Activated naive CD4-positive, alpha-beta T cell treated with anti-CD3 and anti-CD28 coated beads for 36 hours (primary cell): ENCODE measurements at regions of chr6 and their contacts with region 1.

Region 1: GRCh38 chr6:131532580-131533039 is 40.4 kb upstream of the ARG1 start:
- DNase-seq: peak; percentile 88
- H3K4me3 Mint-ChIP-seq: no peak overlapping the region
- H3K27ac Mint-ChIP-seq: peak overlapping the region; percentile 86
- H3K4me1 Mint-ChIP-seq: peaks cover 52% of the 10 kb centered on the region
- H3K27me3 Mint-ChIP-seq: no peaks in the 10 kb centered on the region

Region 2: GRCh38 chr6:130602151-130602770 is 930.3 kb before region 1 on chr6:
- CTCF ChIA-PET with region 1: no interaction called
- intact Hi-C with region 1: loop called (anchors 1 kb)
- DNase-seq: peak; percentile 50
- H3K4me3 Mint-ChIP-seq: no peak overlapping the region
- H3K27ac Mint-ChIP-seq: peak overlapping the region; percentile 28
- H3K4me1 Mint-ChIP-seq: peaks cover 21% of the 10 kb centered on the region
- H3K27me3 Mint-ChIP-seq: no peaks in the 10 kb centered on the region

Region 3: GRCh38 chr6:131116749-131117360 is 415.8 kb before region 1 on chr6:
- CTCF ChIA-PET with region 1: interaction called, 6 read pairs
- intact Hi-C with region 1: loop called (anchors 1 kb)
- DNase-seq: no peak
- H3K4me3 Mint-ChIP-seq: no peak overlapping the region
- H3K27ac Mint-ChIP-seq: no peak overlapping the region
- H3K4me1 Mint-ChIP-seq: no peaks in the 10 kb centered on the region
- H3K27me3 Mint-ChIP-seq: no peaks in the 10 kb centered on the region

Region 4: DNA sequence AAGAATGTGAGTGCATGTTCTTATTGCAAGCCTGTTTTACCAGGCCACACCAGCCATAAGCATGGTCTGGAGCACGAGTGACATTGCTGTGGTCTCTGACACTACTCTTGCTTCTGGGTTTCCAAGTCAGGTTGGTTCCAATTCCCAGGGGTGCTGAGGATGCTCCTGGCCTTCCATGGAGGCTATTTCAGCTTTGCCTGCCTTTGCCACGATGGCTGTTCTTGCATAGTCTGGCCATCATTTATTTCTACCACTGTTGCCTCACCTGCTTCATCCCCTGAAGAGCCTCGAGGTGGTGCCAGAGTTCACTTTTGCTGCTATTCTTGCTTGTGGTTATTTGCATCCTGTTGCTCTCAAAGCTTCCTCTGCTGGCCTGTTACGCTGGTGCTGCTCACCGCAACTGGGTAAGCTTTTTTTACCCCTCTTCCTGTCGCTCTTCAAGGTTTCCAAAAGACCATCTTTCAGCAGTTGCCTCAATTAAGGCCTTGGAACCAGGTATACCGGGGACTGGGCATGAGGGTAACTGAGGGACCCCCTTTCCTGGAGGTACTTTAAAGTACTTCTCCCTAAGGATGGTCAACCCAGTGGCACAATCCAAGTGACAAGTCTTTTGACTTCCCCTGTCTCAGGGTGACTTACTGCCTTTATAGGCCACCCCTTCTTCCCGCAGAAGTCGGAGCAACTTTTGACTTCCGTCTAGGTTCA is 332.9 kb before region 1 on chr6:
- CTCF ChIA-PET with region 1: interaction called, 74 read pairs
- intact Hi-C with region 1: loop called (anchors 1 kb)
- DNase-seq: peak; percentile 84
- H3K4me3 Mint-ChIP-seq: peak overlapping the region; percentile 78
- H3K27ac Mint-ChIP-seq: peak overlapping the region; percentile 96
- H3K4me1 Mint-ChIP-seq: peaks cover 57% of the 10 kb centered on the region
- H3K27me3 Mint-ChIP-seq: no peaks in the 10 kb centered on the region

Region 5: GRCh38 chr6:131281471-131282270 is 250.9 kb before region 1 on chr6:
- CTCF ChIA-PET with region 1: no interaction called
- intact Hi-C with region 1: loop called (anchors 2 kb)
- DNase-seq: peak; percentile 84
- H3K4me3 Mint-ChIP-seq: peak overlapping the region; percentile 75
- H3K27ac Mint-ChIP-seq: peak overlapping the region; percentile 96
- H3K4me1 Mint-ChIP-seq: peaks cover 48% of the 10 kb centered on the region
- H3K27me3 Mint-ChIP-seq: no peaks in the 10 kb centered on the region

Region 6: DNA sequence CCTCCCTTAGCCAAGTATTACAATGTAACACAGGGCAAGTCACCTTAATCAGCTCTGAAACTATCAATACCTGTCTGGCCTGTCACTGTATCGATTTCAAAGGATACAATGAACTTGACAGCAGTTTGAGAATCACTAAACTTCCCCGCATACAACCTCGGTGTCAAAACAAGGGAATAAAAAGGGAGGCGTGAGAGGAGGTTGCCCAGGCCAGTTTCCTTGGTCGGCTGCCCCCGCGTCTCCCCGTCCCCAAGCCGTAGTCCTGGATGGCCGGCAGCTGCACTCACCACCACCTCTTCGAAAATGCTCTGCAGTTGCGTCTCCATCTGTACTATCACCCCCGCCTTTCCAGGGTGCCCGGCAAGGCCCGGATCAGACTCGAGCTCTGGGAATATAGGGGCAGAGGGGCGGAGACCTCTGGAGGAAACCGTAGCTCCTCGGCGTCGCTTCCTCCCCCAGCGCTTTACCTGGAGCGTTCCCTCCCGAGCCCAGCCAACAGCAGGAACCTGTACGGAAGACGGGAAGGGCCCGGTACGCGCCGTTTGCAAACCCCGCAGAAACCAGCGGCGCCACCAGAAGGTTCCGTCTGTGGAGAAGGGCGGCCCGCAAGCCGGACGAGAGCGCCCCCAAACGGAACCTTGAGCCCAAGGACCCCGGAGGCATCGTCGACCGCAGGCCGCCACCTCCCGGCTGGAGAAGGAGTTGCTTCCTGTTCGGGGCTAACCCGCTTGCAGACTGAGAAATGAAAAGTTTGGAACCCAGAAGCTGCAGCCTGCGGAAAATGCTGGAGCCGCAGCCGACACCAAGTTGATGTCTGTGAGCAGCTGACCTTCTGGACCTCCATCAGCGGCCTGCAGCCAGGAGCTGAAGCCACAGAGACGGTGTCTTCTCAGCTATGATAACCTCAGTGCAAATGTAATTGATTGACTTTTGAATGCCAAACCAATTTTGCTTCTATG is 95.4 kb after region 1 on chr6 and contains the start of gene MED23:
- CTCF ChIA-PET with region 1: interaction called, 25 read pairs
- intact Hi-C with region 1: loop called (anchors 1 kb)
- DNase-seq: peak; percentile 96
- H3K4me3 Mint-ChIP-seq: peak within 1 kb of the TSS; percentile 99
- H3K27ac Mint-ChIP-seq: peak within 1 kb of the TSS; percentile 92
- H3K4me1 Mint-ChIP-seq: peaks cover 29% of the 10 kb centered on the region
- H3K27me3 Mint-ChIP-seq: no peaks in the 10 kb centered on the region
- total RNA-seq, gene MED23: 27.4 to 28.8 TPM

Region 7: GRCh38 chr6:131765081-131765803 is 232.6 kb after region 1 on chr6:
- CTCF ChIA-PET with region 1: no interaction called
- intact Hi-C with region 1: no loop called
- DNase-seq: no peak
- H3K4me3 Mint-ChIP-seq: no peak overlapping the region
- H3K27ac Mint-ChIP-seq: no peak overlapping the region
- H3K4me1 Mint-ChIP-seq: no peaks in the 10 kb centered on the region
- H3K27me3 Mint-ChIP-seq: peaks cover 4% of the 10 kb centered on the region